HEK293 (cell line): ENCODE measurements at regions of chrX and their contacts with region 1.

Region 1: DNA sequence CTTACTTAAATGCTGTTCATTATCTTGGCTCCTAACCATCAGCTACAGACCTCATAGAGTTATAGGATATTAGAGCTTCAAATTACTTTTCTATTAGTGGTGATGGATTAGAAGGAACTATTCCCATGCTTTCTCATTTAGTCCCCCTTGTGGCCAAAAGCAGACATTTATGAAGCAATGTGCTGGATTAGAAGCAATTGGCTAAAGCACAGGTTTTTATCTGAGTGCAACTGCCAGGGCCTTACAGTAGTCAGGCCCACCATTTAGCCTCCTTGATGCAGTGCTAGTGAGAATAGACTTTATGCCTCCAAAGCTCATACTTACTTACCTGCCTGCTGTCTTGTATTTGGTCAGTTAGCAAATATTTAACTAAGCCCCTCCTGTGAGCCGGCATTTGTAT is 93.0 kb downstream of the TSPAN7 start:
- H3K4me3 ChIP-seq: no peak overlapping the region
- H3K27ac ChIP-seq: no peak overlapping the region
- H3K4me1 ChIP-seq: no peaks in the 10 kb centered on the region
- CTCF ChIP-seq: no peak

Region 2: DNA sequence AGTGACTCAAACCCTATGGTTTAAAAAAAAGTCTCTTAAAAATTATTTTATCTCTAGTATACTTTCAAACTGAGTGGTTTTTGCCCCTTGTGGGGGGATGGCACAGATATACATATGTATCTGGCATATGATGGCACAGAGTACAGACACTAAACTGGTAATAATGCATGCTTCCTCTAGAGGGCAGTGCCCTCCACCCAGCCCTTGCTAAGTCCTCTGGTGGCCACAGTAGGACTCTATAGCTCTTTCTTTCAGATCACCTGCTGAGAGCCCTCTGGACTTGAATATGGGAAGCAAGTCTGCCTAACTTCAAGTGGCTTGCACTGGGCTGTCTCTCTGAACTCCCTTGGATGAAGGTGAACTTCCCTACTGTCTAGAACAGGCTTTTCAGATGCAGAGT is 26.6 kb before region 1 on chrX:
- CTCF ChIA-PET with region 1: interaction called, 24 read pairs
- POLR2A ChIA-PET with region 1: no interaction called
- H3K4me3 ChIP-seq: no peak overlapping the region
- H3K27ac ChIP-seq: no peak overlapping the region
- H3K4me1 ChIP-seq: no peaks in the 10 kb centered on the region
- CTCF ChIP-seq: no peak

Region 3: GRCh38 chrX:38643903-38644302 is 10.4 kb before region 1 on chrX:
- CTCF ChIA-PET with region 1: interaction called, 28 read pairs
- POLR2A ChIA-PET with region 1: no interaction called
- H3K4me3 ChIP-seq: no peak overlapping the region
- H3K27ac ChIP-seq: no peak overlapping the region
- H3K4me1 ChIP-seq: peaks cover 4% of the 10 kb centered on the region
- CTCF ChIP-seq: no peak